ENCODE measurements at regions of chr1 and their contacts with region 1.

Region 1: GRCh38 chr1:183281553-183282091 is 95.6 kb downstream of the LAMC2 start:
- DNase-seq: peak; percentile 92
- H3K4me3 ChIP-seq: peak overlapping the region; percentile 40
- H3K27ac ChIP-seq: peak overlapping the region; percentile 95
- H3K4me1 ChIP-seq: peaks cover 72% of the 10 kb centered on the region
- H3K27me3 ChIP-seq: no peaks in the 10 kb centered on the region
- CTCF ChIP-seq: peak; percentile 97

Region 2: GRCh38 chr1:183110326-183110865 is 171.2 kb before region 1 on chr1:
- intact Hi-C with region 1: no loop called
- DNase-seq: no peak
- H3K4me3 ChIP-seq: no peak overlapping the region
- H3K27ac ChIP-seq: no peak overlapping the region
- H3K4me1 ChIP-seq: peaks cover 44% of the 10 kb centered on the region
- H3K27me3 ChIP-seq: no peaks in the 10 kb centered on the region
- CTCF ChIP-seq: no peak

Region 3: DNA sequence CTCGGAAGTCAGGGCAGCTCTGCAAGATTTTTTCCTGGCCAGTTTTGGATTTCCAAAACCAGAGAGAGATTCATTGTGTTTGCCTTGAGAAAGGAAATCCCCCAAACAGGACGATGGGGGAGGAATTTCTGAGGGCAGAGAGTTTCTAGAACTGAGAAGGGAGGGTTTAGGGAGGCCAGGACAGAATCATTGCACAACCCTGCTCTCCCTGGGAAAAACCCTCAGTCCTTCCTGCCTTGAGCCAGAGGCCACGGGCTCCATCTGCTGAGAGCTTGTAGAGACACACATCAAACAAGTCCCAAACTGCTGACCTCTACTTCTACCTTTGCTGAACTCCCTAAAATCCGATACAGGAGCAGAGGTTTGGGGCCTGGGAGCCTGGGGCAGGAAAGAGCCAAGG is 36.8 kb after region 1 on chr1:
- intact Hi-C with region 1: loop called (anchors 5 kb)
- DNase-seq: peak; percentile 78
- H3K4me3 ChIP-seq: no peak overlapping the region
- H3K27ac ChIP-seq: peak overlapping the region; percentile 86
- H3K4me1 ChIP-seq: peaks cover 33% of the 10 kb centered on the region
- H3K27me3 ChIP-seq: no peaks in the 10 kb centered on the region
- CTCF ChIP-seq: peak; percentile 82

Measured in left ventricle myocardium inferior (tissue), 1 donor.